Natural killer cell (primary cell): ENCODE measurements at regions of chr2 and their contacts with region 1.

Region 1: DNA sequence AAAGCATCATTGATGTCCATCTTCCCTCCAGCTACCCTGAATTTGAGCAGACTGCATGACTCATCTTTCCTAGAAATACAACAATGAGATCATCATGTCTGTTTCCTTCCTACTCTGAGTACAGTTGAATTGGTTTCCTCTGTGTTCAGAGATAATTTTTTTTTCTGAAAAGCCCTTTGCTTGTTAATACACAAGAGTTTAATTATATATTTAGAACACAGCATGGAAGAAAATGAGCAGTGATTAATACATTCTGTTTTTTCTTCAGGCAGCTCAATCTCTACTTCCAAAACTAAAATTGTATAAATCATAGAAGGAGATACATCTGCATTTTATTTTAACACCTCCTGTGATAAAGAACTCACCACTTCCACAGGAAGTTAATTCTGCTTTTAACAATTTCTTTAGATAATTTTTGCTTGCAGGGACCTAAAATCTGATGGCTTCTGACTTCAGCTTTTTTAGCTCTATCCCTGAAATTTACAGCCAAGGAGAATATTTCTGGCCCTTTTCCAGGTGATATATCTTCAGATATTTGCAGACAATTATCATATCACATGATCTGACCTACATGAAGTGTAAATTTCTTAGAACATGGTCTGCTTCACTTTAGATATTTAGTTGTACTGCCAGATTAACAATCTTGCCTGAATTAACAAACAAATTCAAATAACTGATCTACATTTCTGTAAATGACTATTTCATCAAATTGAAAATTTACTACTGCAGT is 249.0 kb downstream of the TRIB2 start:
- DNase-seq: peak in 1 of 2 donors; percentile 35
- ATAC-seq: peak; percentile 87 to 95 (median 90)
- H3K4me3 ChIP-seq: no peak overlapping the region
- H3K4me3 Mint-ChIP-seq: peak overlapping the region; percentile 65
- H3K27ac ChIP-seq: peak overlapping the region; percentile 43
- H3K27ac Mint-ChIP-seq: peak overlapping the region; percentile 80 to 83
- H3K4me1 ChIP-seq: peaks cover 6% of the 10 kb centered on the region
- H3K4me1 Mint-ChIP-seq: peaks cover 42 to 48% of the 10 kb centered on the region in 2 donors
- H3K27me3 ChIP-seq: no peaks in the 10 kb centered on the region
- H3K27me3 Mint-ChIP-seq: no peaks in the 10 kb centered on the region
- CTCF ChIP-seq: no peak

Region 2: DNA sequence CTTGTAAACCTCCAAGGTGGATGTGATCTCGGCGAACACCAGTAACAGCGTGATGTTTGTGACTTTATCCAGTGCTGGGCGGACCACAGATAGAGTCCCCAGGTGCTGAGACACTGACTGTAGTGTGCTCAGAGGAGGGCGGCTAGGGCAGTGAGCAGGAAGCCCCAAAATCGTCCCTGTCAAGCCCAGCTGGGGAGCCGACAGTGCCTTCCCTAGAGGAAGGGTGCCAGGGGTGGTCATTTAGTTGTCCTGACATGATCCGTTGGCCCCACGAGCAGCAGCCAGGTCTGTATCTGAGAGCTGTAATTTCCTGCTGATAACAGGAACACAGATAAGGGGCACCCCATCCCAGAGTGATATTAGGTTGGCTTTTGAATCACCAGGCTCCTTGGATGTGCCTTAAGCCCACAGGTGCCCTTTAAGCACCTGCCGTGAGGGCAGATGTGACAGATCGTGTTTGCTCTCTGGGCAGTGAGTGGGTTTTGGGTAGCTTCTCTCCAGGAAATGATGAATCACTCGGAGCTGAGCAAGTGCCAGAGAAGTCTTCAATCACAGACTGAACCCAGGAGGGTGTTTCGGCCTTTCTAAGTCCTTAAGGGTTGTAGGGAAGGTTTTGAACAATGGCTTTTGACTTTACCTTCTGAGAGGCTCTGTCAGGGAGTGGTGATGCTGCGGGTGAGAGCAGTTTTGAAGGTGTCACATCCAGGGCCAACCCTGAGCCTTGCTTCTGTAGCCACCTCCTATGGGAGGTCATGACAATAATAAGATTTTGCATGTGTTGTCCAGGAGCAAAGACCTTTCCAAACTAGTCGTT is 1211.6 kb before region 1 on chr2:
- intact Hi-C with region 1: loop called (anchors 5 kb)
- DNase-seq: peak; percentile 53 to 77
- ATAC-seq: peak; percentile 53 to 66 (median 56)
- H3K4me3 ChIP-seq: peak overlapping the region; percentile 15
- H3K4me3 Mint-ChIP-seq: peak overlapping the region; percentile 88
- H3K27ac ChIP-seq: peak overlapping the region; percentile 90
- H3K27ac Mint-ChIP-seq: peak overlapping the region; percentile 95
- H3K4me1 ChIP-seq: peaks cover 73% of the 10 kb centered on the region
- H3K4me1 Mint-ChIP-seq: peaks cover 78 to 81% of the 10 kb centered on the region in 2 donors
- H3K27me3 ChIP-seq: no peaks in the 10 kb centered on the region
- H3K27me3 Mint-ChIP-seq: no peaks in the 10 kb centered on the region
- CTCF ChIP-seq: no peak

Region 3: GRCh38 chr2:11829947-11830707 is 1135.6 kb before region 1 on chr2:
- intact Hi-C with region 1: no loop called
- DNase-seq: peak; percentile 26 to 74
- ATAC-seq: peak; percentile 75 to 81 (median 77)
- H3K4me3 ChIP-seq: peak overlapping the region; percentile 1
- H3K4me3 Mint-ChIP-seq: peak overlapping the region; percentile 88
- H3K27ac ChIP-seq: no peak overlapping the region
- H3K27ac Mint-ChIP-seq: peak overlapping the region; percentile 57 to 84
- H3K4me1 ChIP-seq: peaks cover 39% of the 10 kb centered on the region
- H3K4me1 Mint-ChIP-seq: peaks cover 48 to 49% of the 10 kb centered on the region in 2 donors
- H3K27me3 ChIP-seq: no peaks in the 10 kb centered on the region
- H3K27me3 Mint-ChIP-seq: no peaks in the 10 kb centered on the region
- CTCF ChIP-seq: no peak

Region 4: GRCh38 chr2:12709207-12709522 is 256.5 kb before region 1 on chr2:
- intact Hi-C with region 1: loop called (anchors 2 kb)
- DNase-seq: peak in 1 of 2 donors; percentile 79
- ATAC-seq: peak; percentile 91 to 95 (median 93)
- H3K4me3 ChIP-seq: no peak overlapping the region
- H3K4me3 Mint-ChIP-seq: peak overlapping the region; percentile 77
- H3K27ac ChIP-seq: peak overlapping the region; percentile 86
- H3K27ac Mint-ChIP-seq: peak overlapping the region; percentile 93 to 94
- H3K4me1 ChIP-seq: peaks cover 35% of the 10 kb centered on the region
- H3K4me1 Mint-ChIP-seq: peaks cover 64 to 70% of the 10 kb centered on the region in 2 donors
- H3K27me3 ChIP-seq: no peaks in the 10 kb centered on the region
- H3K27me3 Mint-ChIP-seq: no peaks in the 10 kb centered on the region
- CTCF ChIP-seq: no peak

Region 5: GRCh38 chr2:13745330-13745729 is 779.6 kb after region 1 on chr2:
- intact Hi-C with region 1: no loop called
- DNase-seq: no peak
- ATAC-seq: no peak
- H3K4me3 ChIP-seq: no peak overlapping the region
- H3K4me3 Mint-ChIP-seq: no peak overlapping the region
- H3K27ac ChIP-seq: no peak overlapping the region
- H3K27ac Mint-ChIP-seq: no peak overlapping the region
- H3K4me1 ChIP-seq: no peaks in the 10 kb centered on the region
- H3K4me1 Mint-ChIP-seq: no peaks in the 10 kb centered on the region
- H3K27me3 ChIP-seq: no peaks in the 10 kb centered on the region
- H3K27me3 Mint-ChIP-seq: no peaks in the 10 kb centered on the region
- CTCF ChIP-seq: no peak